ENCODE measurements at regions of chr11 and their contacts with region 1.

Region 1: DNA sequence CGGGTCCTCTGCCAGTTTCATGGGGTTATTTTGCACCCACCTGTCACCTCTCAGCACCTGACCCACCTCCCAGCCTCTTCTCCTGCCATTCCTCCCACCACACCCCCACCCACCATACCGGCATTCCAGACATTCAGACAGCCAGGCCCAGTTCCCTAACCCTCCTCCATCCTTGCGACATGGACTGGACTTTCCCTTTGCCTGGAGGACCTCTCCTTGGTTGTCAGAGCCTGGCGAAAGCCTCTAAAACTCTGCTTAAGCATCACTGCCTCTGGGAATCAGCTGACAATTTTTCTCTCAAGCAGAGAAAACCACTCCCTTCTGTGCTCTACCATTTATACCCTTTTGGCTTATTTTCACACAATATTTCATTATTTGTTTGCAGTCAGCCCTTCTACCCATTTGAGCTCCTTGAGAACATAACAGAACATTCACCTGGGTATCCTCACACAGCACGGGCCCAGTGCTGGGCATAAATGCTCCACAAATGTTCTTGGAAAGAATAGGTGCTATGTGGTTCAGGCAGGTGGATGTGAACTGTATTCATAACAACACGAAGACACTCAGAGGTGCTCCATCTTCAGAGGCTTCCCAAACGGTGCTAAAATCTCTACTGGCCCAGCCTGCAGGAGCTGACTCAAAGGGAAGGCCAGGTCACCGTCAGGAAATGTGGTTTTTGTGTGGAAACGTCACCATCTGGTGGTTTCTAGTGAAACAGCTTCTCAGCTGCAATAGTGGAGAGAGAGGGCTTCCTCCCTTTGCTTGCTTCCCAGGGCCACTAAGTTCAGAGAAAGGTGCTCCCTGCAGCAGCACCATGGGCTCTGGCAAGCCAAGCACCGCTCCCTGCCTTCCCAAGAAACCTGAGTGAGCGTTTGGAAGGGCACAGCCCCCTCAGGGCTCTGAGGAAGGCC is 10.4 kb downstream of the SPATA19 start:
- DNase-seq: no peak
- ATAC-seq: peak; percentile 83

Region 2: GRCh38 chr11:133156986-133157745 is 677.8 kb before region 1 on chr11:
- intact Hi-C with region 1: loop called (anchors 10 kb)
- DNase-seq: peak; percentile 50
- ATAC-seq: peak; percentile 73

Measured in left ventricle myocardium superior (tissue), 1 donor.